ENCODE measurements at regions of chr16 and their contacts with region 1.

Region 1: GRCh38 chr16:66516808-66517585 is 32.9 kb downstream of the TK2 start:
- DNase-seq: peak; percentile 96
- ATAC-seq: peak; percentile 88
- H3K4me3 Mint-ChIP-seq: peak overlapping the region; percentile 83
- H3K27ac Mint-ChIP-seq: peak overlapping the region; percentile 99
- H3K4me1 Mint-ChIP-seq: peaks cover 66% of the 10 kb centered on the region
- H3K27me3 Mint-ChIP-seq: no peaks in the 10 kb centered on the region

Region 2: DNA sequence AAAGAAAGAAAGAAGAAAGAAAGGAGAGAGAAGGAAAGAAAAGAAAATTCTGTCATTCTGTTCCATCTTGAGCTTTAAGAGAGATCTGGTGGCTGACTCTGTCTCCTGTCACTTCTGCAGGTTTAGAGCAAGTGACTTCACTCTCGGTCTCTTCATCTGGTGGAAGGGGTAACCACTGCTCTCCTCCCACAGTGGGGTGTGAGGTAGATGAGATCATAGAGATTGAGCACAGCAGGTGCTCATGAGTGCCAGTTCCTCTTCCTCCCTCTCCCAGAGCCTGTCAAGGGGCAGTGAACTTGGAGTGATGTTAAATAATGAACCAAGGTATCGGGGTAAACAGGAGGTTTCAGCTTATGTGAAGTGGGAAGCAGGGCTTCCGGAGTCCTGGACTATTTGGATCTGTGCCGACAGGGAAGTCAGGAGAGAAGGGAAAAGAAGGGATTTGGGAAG is 42.2 kb before region 1 on chr16:
- CTCF ChIA-PET with region 1: interaction called, 12 read pairs
- DNase-seq: peak; percentile 88
- ATAC-seq: peak; percentile 90
- H3K4me3 Mint-ChIP-seq: no peak overlapping the region
- H3K27ac Mint-ChIP-seq: peak overlapping the region; percentile 63
- H3K4me1 Mint-ChIP-seq: peaks cover 35% of the 10 kb centered on the region
- H3K27me3 Mint-ChIP-seq: no peaks in the 10 kb centered on the region

Region 3: DNA sequence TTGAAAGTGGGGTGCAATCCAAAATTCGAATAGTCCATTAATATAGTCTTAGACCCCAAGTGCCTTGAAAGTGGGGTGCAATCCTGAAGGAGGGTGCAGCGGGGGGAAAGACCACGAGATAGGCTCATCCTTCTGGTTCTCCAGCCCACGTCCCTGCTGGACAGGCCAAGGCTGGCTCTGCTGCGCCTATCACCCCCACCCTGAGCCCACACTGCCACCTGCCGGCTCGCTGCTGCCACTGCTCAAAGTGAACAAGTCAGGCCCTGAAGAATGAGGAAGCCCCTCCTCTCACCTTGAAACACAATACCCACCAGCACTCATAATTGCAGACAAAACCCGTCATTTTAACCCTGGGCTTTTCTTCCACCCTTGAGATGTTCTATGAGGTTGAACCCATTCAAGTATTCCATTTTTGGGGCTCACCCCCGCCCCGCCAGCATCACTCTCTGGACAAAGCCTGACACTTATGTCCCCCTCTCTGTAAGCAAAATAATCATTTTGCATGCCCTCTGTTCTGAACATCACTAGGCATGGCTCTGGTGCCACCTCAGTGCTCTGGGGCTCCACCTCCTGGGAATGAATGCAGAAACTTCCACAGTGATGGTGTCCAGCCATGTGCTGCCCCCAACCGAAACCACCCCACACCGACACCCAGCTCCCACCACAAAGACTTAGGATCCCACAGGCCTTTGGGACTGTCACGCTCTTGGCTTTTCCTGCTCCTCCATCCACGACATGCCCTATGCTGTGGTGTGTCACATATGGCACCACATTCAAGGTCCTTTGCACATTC is 33.1 kb before region 1 on chr16:
- CTCF ChIA-PET with region 1: interaction called, 12 read pairs
- DNase-seq: peak; percentile 86
- ATAC-seq: peak; percentile 85
- H3K4me3 Mint-ChIP-seq: no peak overlapping the region
- H3K27ac Mint-ChIP-seq: no peak overlapping the region
- H3K4me1 Mint-ChIP-seq: peaks cover 29% of the 10 kb centered on the region
- H3K27me3 Mint-ChIP-seq: no peaks in the 10 kb centered on the region

Region 4: GRCh38 chr16:66552286-66553177 is 35.5 kb after region 1 on chr16 and contains the start of gene CKLF:
- CTCF ChIA-PET with region 1: interaction called, 52 read pairs
- DNase-seq: peak; percentile 94
- ATAC-seq: peak; percentile 74
- H3K4me3 Mint-ChIP-seq: peak within 1 kb of the TSS; percentile 98
- H3K27ac Mint-ChIP-seq: peak within 1 kb of the TSS; percentile 96
- H3K4me1 Mint-ChIP-seq: peaks cover 80% of the 10 kb centered on the region
- H3K27me3 Mint-ChIP-seq: no peaks in the 10 kb centered on the region
- total RNA-seq, gene CKLF: 199 to 220 TPM

Region 5: DNA sequence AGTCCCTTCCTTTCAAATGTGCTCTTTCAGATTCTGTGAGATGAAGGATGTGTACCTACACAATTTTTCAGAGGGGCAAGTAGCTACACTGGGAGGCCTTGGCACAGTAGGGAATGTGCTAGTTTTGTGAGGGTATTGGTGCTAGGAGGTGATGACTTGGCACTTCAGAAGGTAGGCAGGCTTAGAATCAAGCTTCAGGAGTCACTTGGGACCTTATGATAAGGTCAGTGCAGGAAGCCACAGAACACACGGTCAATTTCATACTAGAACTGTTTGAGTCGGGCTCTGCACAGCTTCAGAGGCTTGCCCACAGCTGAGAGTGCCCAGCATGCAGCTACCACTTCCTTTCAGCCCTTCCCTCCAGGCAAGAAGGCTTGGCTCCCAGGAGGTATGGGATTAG is 55.4 kb after region 1 on chr16:
- CTCF ChIA-PET with region 1: no interaction called
- DNase-seq: no peak
- ATAC-seq: no peak
- H3K4me3 Mint-ChIP-seq: no peak overlapping the region
- H3K27ac Mint-ChIP-seq: no peak overlapping the region
- H3K4me1 Mint-ChIP-seq: peaks cover 19% of the 10 kb centered on the region
- H3K27me3 Mint-ChIP-seq: peaks cover 5% of the 10 kb centered on the region

Measured in activated CD8-positive, alpha-beta memory T cell treated with anti-CD3 and anti-CD28 coated beads, Interleukin-2, amount 10 ng/mL, durations not matched to agents 7 days and 5 days (primary cell).